ENCODE measurements at regions of chr19 and their contacts with region 1.

Region 1: DNA sequence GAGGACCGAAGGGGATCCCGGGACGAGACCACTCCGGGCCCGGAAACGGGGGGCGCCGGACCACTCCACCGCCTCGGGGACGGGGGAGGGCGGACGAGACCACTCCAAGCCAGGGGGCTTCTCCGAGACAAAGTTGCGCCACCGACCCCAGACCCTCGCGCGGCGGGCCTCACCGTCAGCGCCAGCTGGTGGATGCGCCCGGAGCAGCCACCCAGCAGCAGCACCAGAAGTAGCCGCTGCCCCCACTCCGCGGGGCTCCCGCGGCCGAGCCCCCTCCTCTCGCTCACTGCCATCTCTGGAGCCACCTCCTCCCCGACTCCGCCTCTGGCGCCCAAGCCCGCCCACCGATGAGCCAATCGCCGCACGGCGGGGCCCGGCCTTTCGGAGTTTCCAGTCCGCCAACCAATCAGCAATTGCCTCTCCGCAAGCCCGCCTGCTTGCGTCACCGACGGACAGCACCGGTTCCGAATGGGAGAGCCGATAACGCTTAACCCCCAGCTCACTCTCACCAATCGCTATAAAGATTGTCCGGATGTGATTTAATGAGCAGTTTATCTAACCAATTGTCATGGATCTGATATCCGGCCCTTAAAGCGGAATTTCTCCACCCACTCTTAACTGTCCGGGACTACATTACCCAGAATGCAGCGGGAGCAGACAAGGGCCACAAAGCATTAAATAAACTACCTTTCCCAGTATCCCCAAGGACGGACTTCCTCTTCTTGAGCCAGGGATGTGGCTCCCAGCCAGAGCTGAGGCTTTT is at the start of gene GPR108:
- DNase-seq: peak; percentile 100
- H3K4me3 Mint-ChIP-seq: peak within 1 kb of the TSS; percentile 95
- H3K27ac Mint-ChIP-seq: peak within 1 kb of the TSS; percentile 99
- H3K4me1 Mint-ChIP-seq: peaks cover 39% of the 10 kb centered on the region
- H3K27me3 Mint-ChIP-seq: no peaks in the 10 kb centered on the region
- total RNA-seq, gene GPR108: 64.6 TPM

Region 2: DNA sequence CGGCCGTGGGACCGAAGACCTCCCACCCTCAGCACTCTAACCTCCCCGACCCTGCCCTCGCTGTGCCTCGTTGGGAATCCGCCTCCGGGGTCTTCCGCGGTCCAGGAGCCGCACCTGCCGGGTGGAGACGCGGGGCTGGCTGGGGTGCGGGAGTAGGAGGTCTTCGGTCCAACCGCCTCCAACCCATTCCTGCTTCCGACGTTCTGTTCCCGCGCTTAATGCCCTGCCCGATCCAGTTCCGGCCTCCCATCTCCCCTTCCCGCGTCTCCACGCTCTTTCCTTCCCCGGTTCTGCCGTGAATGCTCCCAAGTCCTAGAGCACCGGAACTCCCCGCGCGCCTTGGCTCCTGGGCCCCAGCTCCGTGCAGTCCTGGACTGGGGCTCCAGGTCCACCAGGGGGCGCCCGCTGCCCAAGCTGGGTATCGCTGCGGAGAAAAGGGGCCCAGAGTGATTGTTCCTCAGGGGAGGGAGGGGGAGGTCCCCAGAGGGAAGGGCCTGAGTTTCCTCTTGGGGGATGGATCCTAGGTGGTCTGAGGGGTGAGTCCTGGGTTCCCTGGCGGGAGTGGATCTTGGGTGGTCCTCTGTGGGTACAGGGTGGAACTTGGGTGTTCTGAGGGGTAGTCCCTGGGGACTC is 220.7 kb before region 1 on chr19:
- CTCF ChIA-PET with region 1: interaction called, 12 read pairs
- POLR2A ChIA-PET with region 1: interaction called, 4 read pairs
- DNase-seq: peak; percentile 92
- H3K4me3 Mint-ChIP-seq: peak overlapping the region; percentile 89
- H3K27ac Mint-ChIP-seq: peak overlapping the region; percentile 89
- H3K4me1 Mint-ChIP-seq: peaks cover 32% of the 10 kb centered on the region
- H3K27me3 Mint-ChIP-seq: no peaks in the 10 kb centered on the region

Region 3: DNA sequence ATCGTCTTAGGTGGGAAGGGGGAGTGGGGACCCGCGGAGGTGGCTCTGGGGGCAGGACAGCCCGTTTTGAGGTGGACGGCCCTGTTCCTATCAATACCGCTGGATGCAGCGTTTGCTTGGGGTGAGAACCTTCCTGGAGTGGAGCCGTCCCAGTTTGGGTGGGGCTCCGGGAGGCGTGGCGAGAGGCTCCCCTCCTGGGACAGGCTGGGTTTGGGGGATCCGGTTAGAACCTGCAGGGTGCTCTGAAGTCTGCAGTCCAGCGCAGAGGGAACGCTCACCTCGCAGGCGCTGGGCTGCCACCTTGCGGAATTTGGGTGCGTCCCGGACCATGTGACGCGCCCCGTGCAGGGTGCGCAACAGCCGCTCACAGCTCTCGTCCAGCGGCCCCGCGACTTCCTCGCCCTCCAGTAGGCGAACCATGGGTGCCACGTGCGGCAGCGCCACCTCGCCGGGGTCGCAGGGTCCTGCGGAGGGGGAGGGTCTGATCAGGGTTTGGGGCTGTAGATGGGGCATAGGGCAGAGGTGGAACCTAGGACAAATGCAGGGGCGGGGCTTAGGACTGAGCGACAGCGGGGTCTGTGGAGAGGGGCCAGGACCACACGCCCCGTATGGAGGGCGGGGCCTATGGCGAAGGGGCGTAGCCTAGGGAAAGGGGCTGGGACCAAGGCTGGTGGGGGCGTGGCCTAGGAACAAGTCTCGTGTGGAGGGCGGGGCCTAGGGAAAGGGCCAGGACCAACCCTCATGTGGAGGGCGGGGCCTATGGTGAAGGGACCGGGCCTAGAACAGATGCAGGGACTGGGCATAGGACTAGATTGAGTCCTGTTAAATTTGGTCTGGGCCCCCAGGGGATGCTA is 15.9 kb after region 1 on chr19:
- CTCF ChIA-PET with region 1: interaction called, 14 read pairs
- POLR2A ChIA-PET with region 1: no interaction called
- DNase-seq: peak; percentile 84
- H3K4me3 Mint-ChIP-seq: peak overlapping the region; percentile 72
- H3K27ac Mint-ChIP-seq: peak overlapping the region; percentile 90
- H3K4me1 Mint-ChIP-seq: peaks cover 19% of the 10 kb centered on the region
- H3K27me3 Mint-ChIP-seq: no peaks in the 10 kb centered on the region

Region 4: GRCh38 chr19:6862673-6863078 is 125.2 kb after region 1 on chr19:
- CTCF ChIA-PET with region 1: interaction called, 55 read pairs
- POLR2A ChIA-PET with region 1: interaction called, 4 read pairs
- DNase-seq: peak; percentile 93
- H3K4me3 Mint-ChIP-seq: peak overlapping the region; percentile 79
- H3K27ac Mint-ChIP-seq: peak overlapping the region; percentile 79
- H3K4me1 Mint-ChIP-seq: peaks cover 22% of the 10 kb centered on the region
- H3K27me3 Mint-ChIP-seq: no peaks in the 10 kb centered on the region

Measured in activated CD4-positive, alpha-beta T cell treated with anti-CD3 and anti-CD28 coated beads, Interleukin-2, amount 10 ng/mL, durations not matched to agents 7 days and 5 days (primary cell).